ENCODE measurements at regions of chr2 and their contacts with region 1.

Region 1: GRCh38 chr2:73176881-73177644 is 25.3 kb upstream of the NOTO start:
- DNase-seq: peak; percentile 91 to 95 (median 92)
- ATAC-seq: peak; percentile 85 to 94 (median 93)
- H3K4me3 ChIP-seq: peak overlapping the region; percentile 28 to 71 (median 60)
- H3K27ac ChIP-seq: peak overlapping the region; percentile 63 to 87 (median 77)
- H3K4me1 ChIP-seq: peaks cover 0 to 31% (median 23%) of the 10 kb centered on the region in 12 donors
- H3K27me3 ChIP-seq: peaks cover 0 to 43% (median 7%) of the 10 kb centered on the region in 9 donors
- CTCF ChIP-seq: peak; percentile 96 to 99 (median 98)
- POLR2A ChIP-seq: peak in 1 of 2 donors; percentile 33

Region 2: GRCh38 chr2:72892506-72893173 is 284.4 kb before region 1 on chr2:
- intact Hi-C with region 1: loop called in 7 of 10 experiments (anchors 2 to 5 kb)
- DNase-seq: peak; percentile 48 to 81 (median 76)
- ATAC-seq: peak; percentile 59 to 85 (median 79)
- H3K4me3 ChIP-seq: no peak overlapping the region
- H3K27ac ChIP-seq: no peak overlapping the region
- H3K4me1 ChIP-seq: peaks cover 3 to 37% (median 27%) of the 10 kb centered on the region in 12 donors
- H3K27me3 ChIP-seq: peaks cover 0 to 17% (median 9%) of the 10 kb centered on the region in 9 donors
- CTCF ChIP-seq: peak; percentile 56 to 82 (median 71)
- POLR2A ChIP-seq: no peak

Region 3: DNA sequence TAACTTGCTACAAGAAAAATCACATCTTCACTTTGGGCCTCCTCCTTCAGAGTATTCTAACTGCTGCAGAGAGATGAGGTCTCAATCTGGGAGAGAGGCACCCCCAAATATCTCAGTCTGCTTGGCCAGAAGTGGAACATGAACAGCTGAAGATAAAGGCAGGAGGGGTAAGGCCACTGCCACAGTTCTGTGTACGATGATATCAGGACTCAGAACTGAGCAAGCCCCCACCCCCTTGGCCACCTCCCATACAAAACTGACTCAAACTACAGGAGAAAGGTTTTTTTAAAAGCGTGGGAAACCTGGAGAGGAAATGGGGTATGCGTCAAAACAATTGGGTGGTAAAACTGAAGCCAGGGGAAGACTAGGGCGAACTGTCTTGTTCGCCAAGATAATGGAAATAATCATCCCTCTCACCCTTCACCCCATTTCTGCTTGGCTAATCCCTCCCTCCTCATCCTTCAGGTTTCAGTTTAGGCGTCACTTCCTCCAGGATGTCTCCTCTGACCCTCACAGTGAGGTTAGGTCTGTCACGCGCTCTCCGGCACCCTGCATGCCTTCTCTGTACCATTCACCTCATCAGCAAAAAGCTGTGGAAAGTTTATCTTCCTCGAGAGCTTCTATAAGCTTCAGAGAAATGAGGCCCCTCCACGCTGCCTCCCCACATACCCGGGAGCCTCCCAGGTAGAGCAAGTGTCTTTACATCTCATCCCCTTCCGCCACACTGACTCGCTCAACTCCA is 169.9 kb before region 1 on chr2:
- intact Hi-C with region 1: no loop called
- DNase-seq: peak in 1 of 5 donors; percentile 2
- ATAC-seq: no peak
- H3K4me3 ChIP-seq: no peak overlapping the region
- H3K27ac ChIP-seq: no peak overlapping the region
- H3K4me1 ChIP-seq: peaks cover 0 to 5% (median 0%) of the 10 kb centered on the region in 12 donors
- H3K27me3 ChIP-seq: no peaks in the 10 kb centered on the region
- CTCF ChIP-seq: no peak
- POLR2A ChIP-seq: no peak

Region 4: GRCh38 chr2:73071360-73072133 is 105.5 kb before region 1 on chr2 and contains the start of gene SFXN5:
- intact Hi-C with region 1: loop called in 1 of 10 experiments (anchors 5 kb)
- DNase-seq: peak; percentile 98 to 100 (median 99)
- ATAC-seq: peak; percentile 96 to 98 (median 96)
- H3K4me3 ChIP-seq: peak within 1 kb of the TSS; percentile 57 to 99 (median 87)
- H3K27ac ChIP-seq: peak within 1 kb of the TSS; percentile 74 to 98 (median 93)
- H3K4me1 ChIP-seq: peaks cover 3 to 39% (median 21%) of the 10 kb centered on the region in 12 donors
- H3K27me3 ChIP-seq: no peaks in the 10 kb centered on the region
- CTCF ChIP-seq: peak in 8 of 12 donors; percentile 13 to 50 (median 30)
- POLR2A ChIP-seq: no peak
- total RNA-seq, gene SFXN5: 6.0 to 12.5 (median 9.1) TPM

Region 5: GRCh38 chr2:73085691-73086360 is 91.2 kb before region 1 on chr2:
- intact Hi-C with region 1: loop called in 3 of 10 experiments (anchors 1 to 5 kb)
- DNase-seq: peak; percentile 73 to 89 (median 80)
- ATAC-seq: peak; percentile 28 to 80 (median 68)
- H3K4me3 ChIP-seq: no peak overlapping the region
- H3K27ac ChIP-seq: no peak overlapping the region
- H3K4me1 ChIP-seq: peaks cover 0 to 42% (median 18%) of the 10 kb centered on the region in 12 donors
- H3K27me3 ChIP-seq: no peaks in the 10 kb centered on the region
- CTCF ChIP-seq: peak; percentile 88 to 99 (median 94)
- POLR2A ChIP-seq: no peak

Region 6: DNA sequence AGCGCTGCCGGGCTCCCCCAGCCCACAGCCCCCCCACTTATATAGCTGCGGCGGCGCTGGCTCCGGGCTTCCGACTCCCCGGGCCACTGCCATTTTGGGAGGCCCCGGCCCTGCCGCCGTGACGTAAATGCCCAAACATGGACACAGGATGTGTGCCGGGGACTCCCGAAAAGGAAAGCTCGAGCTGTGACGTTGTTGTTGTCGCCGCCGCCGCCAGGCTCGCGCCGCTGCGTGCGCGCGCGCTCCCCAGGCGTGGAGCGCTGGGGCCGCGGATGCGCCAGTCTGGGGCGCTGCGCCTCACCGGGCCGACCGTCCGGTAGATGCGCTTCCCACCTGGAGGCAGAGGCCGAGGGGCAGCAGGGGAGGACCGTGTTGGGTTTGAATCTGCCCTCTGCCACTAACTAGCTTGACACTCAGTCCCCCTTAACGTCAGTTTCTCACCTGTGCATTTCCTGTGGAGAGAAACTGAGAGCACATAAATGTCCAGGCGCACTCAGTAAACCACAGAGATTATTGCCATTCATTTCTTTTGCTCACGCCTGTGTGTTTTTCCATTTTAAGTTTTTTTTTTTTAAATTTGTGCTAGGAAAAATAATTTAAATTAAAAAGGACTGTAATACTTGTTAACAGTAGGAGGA is 116.6 kb after region 1 on chr2 and contains the start of gene EGR4:
- intact Hi-C with region 1: no loop called
- DNase-seq: peak; percentile 32 to 75 (median 59)
- ATAC-seq: peak in 3 of 4 donors; percentile 68 to 83 (median 72)
- H3K4me3 ChIP-seq: peak within 1 kb of the TSS; percentile 19 to 63 (median 42)
- H3K27ac ChIP-seq: no peak within 1 kb of the TSS
- H3K4me1 ChIP-seq: peaks cover 0 to 27% (median 9%) of the 10 kb centered on the region in 12 donors
- H3K27me3 ChIP-seq: peaks cover 42 to 98% (median 69%) of the 10 kb centered on the region in 9 donors
- CTCF ChIP-seq: no peak
- POLR2A ChIP-seq: no peak
- total RNA-seq, gene EGR4: not detected